SK-N-SH (cell line): ENCODE measurements at regions of chr13 and their contacts with region 1.

Region 1: DNA sequence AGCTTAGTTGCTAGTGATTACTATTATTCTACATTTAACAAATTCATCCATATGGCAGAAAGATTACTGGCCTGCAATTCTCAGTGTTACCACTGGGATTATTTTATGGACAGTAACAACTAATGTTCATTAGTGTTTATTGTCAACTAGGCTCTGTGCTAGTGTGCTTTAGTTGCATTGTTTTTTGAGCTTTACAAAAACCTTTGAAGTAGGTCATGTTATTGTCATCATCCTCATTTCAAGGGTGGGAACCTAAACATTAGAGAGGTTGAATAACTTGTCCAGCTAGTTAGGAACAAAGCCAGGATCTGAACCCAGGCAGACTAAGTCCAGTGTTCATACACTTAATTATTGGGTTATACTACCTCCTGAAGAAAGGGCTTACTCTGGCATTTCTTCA is 27.8 kb upstream of the TDRD3 start:
- DNase-seq: peak; percentile 3
- H3K4me3 ChIP-seq: no peak overlapping the region
- H3K27ac ChIP-seq: no peak overlapping the region
- H3K4me1 ChIP-seq: no peaks in the 10 kb centered on the region
- H3K27me3 ChIP-seq: no peaks in the 10 kb centered on the region
- CTCF ChIP-seq: peak; percentile 55
- EP300 ChIP-seq: no peak
- RAD21 ChIP-seq: no peak

Region 2: DNA sequence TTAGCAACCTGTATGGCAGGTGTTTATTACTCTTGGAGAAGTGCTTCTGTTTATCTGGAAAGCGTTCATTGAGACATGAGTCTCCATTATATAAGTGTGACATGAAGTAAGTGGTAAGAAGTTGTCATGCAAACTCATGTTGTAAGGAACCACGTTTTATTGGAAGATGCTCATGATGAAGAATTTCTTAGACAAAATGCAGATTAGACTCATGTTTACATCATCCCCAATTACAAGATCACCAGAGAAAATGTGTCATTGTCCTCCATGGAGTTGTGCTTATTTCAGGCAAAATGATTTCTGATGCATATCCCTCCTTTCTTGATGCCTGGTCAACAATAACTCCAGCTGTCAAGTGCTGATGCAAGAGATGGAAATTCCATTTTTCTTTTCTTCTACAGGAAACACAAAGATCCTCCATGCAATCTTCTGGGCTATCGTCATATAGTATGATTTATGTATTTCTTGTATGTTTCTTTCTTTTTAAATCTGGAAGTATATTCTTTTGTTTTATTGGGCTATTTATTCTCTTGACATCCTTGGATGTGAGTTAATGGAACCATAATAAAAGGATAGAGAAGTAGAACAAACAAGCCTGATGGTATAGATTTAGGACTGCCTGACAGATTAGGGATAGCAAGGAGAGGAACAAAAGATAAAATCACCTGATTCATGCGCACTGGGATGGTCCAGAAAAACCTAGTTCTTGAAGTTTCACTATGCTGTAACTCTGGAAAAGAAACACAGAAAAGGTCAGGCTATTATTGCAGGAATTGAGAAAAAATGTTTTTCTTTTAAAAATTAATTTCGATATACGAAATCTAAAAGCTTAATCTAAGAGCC is 154.8 kb before region 1 on chr13:
- CTCF ChIA-PET with region 1: no interaction called
- POLR2A ChIA-PET with region 1: no interaction called
- DNase-seq: no peak
- H3K4me3 ChIP-seq: no peak overlapping the region
- H3K27ac ChIP-seq: no peak overlapping the region
- H3K4me1 ChIP-seq: no peaks in the 10 kb centered on the region
- H3K27me3 ChIP-seq: no peaks in the 10 kb centered on the region
- CTCF ChIP-seq: no peak
- EP300 ChIP-seq: no peak
- RAD21 ChIP-seq: no peak

Region 3: DNA sequence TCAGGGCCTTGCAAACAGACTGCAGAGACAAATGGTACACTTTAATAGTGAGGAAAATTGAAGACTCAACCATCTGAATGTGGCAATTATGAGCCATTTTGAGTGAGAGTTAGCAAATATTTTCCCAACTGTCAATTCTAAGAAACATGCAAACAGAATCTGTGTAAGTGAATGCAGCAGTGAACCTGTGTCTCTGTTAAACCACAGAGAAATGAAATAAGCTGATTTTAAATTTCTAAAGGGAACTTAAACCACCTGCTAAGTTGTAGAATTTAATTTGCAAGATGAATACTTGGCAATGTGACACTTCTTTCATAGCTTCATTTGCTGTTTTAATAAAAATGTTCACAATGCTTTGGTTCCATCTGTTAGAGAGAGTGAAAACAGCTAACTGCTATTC is 14.2 kb before region 1 on chr13:
- CTCF ChIA-PET with region 1: interaction called, 16 read pairs
- POLR2A ChIA-PET with region 1: no interaction called
- DNase-seq: no peak
- H3K4me3 ChIP-seq: no peak overlapping the region
- H3K27ac ChIP-seq: no peak overlapping the region
- H3K4me1 ChIP-seq: no peaks in the 10 kb centered on the region; a peak in 1 of 4 replicates
- H3K27me3 ChIP-seq: no peaks in the 10 kb centered on the region
- CTCF ChIP-seq: no peak
- EP300 ChIP-seq: no peak
- RAD21 ChIP-seq: no peak

Region 4: GRCh38 chr13:60463787-60464186 is 94.5 kb after region 1 on chr13:
- CTCF ChIA-PET with region 1: no interaction called
- POLR2A ChIA-PET with region 1: no interaction called
- DNase-seq: no peak
- H3K4me3 ChIP-seq: no peak overlapping the region
- H3K27ac ChIP-seq: no peak overlapping the region
- H3K4me1 ChIP-seq: no peaks in the 10 kb centered on the region
- H3K27me3 ChIP-seq: no peaks in the 10 kb centered on the region
- CTCF ChIP-seq: no peak
- EP300 ChIP-seq: no peak
- RAD21 ChIP-seq: no peak